ENCODE measurements at regions of chr12 and their contacts with region 1.

Region 1: GRCh38 chr12:105141320-105141918 is 33.9 kb downstream of the WASHC4 start:
- DNase-seq: no peak
- ATAC-seq: no peak
- H3K4me3 Mint-ChIP-seq: no peak overlapping the region
- H3K27ac Mint-ChIP-seq: no peak overlapping the region
- H3K4me1 Mint-ChIP-seq: peaks cover 9% of the 10 kb centered on the region
- H3K27me3 Mint-ChIP-seq: no peaks in the 10 kb centered on the region
- CTCF ChIP-seq: no peak

Region 2: DNA sequence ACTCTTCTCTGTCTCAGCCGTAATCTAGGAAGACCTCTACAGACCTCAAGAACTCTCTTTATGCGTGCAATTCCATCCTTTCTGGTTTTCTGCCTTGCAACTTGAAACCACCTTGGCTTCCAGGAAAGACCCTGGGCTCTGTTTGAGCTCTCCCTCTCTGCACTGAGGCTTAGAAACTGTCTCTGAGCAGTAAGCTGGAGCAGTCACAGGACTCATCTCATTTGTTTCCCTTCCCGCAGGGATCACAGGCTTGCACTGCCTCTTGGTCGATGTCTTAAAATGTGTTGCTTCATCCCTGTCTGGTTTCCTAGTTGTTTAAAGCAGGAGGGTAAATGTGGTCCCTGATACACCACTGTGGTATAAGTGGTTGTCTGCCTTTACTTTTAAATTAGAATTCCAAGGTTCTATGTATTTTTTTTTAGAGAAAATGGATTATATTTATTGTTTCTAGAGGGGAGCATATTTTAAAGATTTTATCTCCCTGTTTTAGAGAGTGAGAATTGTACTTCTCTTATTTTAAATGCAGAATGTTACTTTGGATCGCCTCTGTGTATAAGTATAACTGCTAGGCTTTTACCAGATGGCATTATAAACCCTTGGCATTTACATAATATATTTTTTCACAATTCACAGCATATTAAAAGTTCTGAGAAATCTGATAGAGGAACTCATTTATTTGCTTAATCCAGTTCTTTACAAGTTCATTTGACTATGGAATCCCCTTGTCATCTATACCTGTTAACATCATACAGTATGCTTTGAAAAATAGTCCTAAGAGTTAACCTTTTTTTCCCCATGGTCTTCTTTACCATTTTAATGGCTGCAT is 811.5 kb before region 1 on chr12:
- CTCF ChIA-PET with region 1: no interaction called
- POLR2A ChIA-PET with region 1: no interaction called
- intact Hi-C with region 1: loop called (anchors 10 kb)
- DNase-seq: no peak
- ATAC-seq: no peak
- H3K4me3 Mint-ChIP-seq: no peak overlapping the region
- H3K27ac Mint-ChIP-seq: no peak overlapping the region
- H3K4me1 Mint-ChIP-seq: no peaks in the 10 kb centered on the region
- H3K27me3 Mint-ChIP-seq: no peaks in the 10 kb centered on the region
- CTCF ChIP-seq: no peak

Region 3: DNA sequence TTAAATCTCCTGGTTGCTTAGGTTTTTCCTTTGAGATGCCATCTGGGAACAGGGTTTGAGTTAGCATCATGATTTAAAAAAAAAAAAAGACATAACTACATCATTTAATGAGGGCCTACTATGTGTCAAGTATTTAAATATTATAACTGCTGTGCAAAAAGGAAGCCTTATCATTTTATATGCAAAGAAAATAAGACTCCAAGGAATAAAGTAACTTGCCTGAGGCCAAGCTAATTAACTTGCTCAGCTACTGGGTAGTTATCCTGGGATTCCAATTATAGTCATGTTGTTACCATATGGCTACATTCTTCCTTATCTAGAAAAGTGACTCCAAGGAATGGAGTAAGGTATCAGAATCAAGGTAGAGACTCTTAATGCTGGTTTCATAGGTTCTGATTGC is 306.8 kb before region 1 on chr12:
- CTCF ChIA-PET with region 1: no interaction called
- POLR2A ChIA-PET with region 1: no interaction called
- intact Hi-C with region 1: no loop called
- DNase-seq: no peak
- ATAC-seq: no peak
- H3K4me3 Mint-ChIP-seq: no peak overlapping the region
- H3K27ac Mint-ChIP-seq: no peak overlapping the region
- H3K4me1 Mint-ChIP-seq: no peaks in the 10 kb centered on the region
- H3K27me3 Mint-ChIP-seq: no peaks in the 10 kb centered on the region
- CTCF ChIP-seq: no peak

Region 4: DNA sequence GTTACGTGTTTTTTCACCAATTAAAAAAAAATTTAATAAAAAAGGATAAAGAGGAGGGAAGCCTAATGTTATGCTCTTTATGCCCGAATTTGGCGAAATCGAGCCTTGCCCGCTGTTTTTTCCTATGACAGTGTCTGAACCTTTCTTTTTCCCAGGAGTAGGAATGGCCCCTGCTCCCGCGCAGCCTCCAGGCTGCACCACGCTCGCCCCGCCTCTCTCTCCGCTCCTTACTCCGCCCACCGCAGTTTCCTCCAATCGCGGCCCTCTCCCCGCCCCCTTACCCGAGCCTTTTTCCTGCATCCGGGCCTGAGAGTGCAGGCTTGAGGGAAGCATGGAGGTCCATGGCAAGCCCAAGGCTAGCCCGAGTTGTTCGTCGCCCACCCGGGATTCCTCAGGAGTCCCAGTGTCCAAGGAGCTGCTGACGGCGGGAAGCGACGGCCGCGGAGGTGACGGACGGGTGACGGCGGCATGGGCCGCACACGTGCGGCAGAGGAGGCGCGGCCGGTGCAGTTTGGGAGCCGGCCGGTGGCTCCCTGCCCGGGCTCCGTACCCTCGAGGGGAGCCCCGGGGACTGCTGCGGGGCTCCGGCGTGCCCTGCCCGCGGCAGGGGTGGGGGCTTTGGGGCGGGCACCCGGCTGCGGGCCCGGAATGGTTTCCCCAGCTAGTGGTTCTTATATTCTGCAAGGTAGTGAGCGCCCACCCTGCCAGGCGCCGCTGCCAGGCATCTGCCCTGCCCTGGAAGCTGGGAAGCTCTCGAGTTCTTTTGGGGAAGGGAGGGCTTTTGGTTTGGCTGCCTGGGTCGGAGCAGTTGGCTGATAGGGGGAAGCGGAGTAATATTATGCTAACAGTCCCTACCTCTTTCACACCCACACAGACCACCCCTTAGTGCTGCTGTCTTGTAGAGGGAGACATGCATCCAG is 155.1 kb before region 1 on chr12 and contains the start of gene NOPCHAP1:
- CTCF ChIA-PET with region 1: no interaction called
- POLR2A ChIA-PET with region 1: no interaction called
- intact Hi-C with region 1: no loop called
- DNase-seq: peak; percentile 83
- ATAC-seq: peak; percentile 98
- H3K4me3 Mint-ChIP-seq: peak within 1 kb of the TSS; percentile 91
- H3K27ac Mint-ChIP-seq: peak within 1 kb of the TSS; percentile 70
- H3K4me1 Mint-ChIP-seq: peaks cover 24% of the 10 kb centered on the region
- H3K27me3 Mint-ChIP-seq: no peaks in the 10 kb centered on the region
- CTCF ChIP-seq: no peak
- total RNA-seq, gene NOPCHAP1: 26.4 and 30.0 TPM in 2 replicates

Region 5: DNA sequence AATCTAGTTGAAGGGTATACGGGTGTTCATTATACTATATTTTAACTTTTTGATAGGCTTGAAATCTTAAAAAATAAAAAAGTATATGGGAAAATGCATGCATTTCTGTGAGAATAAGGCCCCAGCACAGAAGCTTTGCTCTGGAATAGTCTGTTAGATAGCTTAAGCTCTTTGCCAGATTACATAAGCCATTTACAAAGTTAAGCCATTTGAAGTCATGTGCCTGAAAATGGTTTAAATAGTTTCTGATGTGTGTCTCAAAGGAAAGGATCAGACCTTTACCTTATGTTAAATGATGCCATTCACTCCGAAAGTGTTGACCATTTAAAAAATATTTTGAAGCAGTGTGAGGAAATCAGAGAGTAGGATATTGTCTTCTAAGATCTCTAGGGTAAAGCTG is 17.5 kb after region 1 on chr12:
- CTCF ChIA-PET with region 1: interaction called, 3 read pairs
- POLR2A ChIA-PET with region 1: no interaction called
- intact Hi-C with region 1: loop called (anchors 2 kb)
- DNase-seq: no peak
- ATAC-seq: no peak
- H3K4me3 Mint-ChIP-seq: no peak overlapping the region
- H3K27ac Mint-ChIP-seq: no peak overlapping the region
- H3K4me1 Mint-ChIP-seq: no peaks in the 10 kb centered on the region
- H3K27me3 Mint-ChIP-seq: no peaks in the 10 kb centered on the region
- CTCF ChIP-seq: no peak

Region 6: DNA sequence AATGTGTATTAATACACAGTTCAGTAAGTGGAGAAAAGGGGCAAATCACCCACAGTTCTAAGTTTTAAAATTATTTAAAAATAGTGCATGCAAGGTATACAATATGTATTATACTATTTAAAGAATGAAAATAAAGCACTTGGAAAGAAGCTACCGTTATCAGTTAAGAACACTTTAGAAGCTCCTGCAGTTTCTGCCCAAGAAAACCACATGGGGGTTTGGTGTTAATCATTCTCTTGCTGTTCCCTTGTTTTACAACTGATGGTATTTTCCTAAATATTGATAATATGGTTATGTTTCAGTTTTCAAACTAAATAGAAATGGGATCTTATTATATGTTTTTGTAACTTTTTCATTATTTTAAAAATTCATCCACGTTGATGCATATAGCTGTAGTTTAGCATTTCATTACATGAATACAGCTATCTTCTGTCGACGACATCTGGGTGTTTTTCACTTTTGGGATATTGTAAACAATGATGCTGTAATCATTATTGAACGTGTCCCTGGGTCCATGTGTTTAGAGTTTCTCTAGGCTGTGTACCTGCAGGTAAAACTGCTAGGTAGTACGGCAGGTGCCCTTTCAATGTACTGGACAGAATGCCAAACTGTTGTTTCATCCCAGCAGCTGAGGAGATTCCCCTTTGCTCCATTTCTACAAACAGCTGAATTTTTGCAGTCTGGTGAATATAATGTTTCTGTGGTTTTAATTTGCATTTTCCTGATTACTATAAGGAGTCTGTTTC is 30.4 kb after region 1 on chr12:
- CTCF ChIA-PET with region 1: no interaction called
- POLR2A ChIA-PET with region 1: no interaction called
- intact Hi-C with region 1: loop called (anchors 5 kb)
- DNase-seq: no peak
- ATAC-seq: no peak
- H3K4me3 Mint-ChIP-seq: no peak overlapping the region
- H3K27ac Mint-ChIP-seq: peak overlapping the region; percentile 4
- H3K4me1 Mint-ChIP-seq: no peaks in the 10 kb centered on the region
- H3K27me3 Mint-ChIP-seq: no peaks in the 10 kb centered on the region
- CTCF ChIP-seq: no peak

Region 7: DNA sequence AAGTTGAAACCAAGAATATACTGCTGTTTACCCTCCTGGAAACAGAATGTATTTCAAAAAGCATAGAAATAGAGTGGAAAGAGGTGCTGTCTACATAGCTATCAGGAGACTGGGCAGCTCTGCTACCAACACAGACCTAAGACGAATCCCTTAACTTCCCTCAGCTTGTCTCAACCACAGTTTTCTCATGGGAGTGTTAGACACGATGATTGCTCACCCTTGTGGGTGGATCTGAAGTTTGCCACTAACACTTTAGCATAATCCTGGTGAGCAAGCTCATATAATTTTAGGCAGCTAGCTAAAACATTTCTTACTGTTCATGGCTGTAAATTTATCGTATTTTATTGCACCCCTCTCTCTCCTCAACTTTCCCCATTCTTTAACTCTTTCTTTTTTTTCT is 227.6 kb after region 1 on chr12:
- CTCF ChIA-PET with region 1: no interaction called
- POLR2A ChIA-PET with region 1: no interaction called
- intact Hi-C with region 1: no loop called
- DNase-seq: no peak
- ATAC-seq: no peak
- H3K4me3 Mint-ChIP-seq: no peak overlapping the region
- H3K27ac Mint-ChIP-seq: no peak overlapping the region
- H3K4me1 Mint-ChIP-seq: peaks cover 4% of the 10 kb centered on the region
- H3K27me3 Mint-ChIP-seq: no peaks in the 10 kb centered on the region
- CTCF ChIP-seq: no peak